ENCODE measurements at regions of chr19 and their contacts with region 1.

Region 1: GRCh38 chr19:49983645-49984229 is 22.8 kb upstream of the SIGLEC11 start:
- DNase-seq: peak; percentile 79
- ATAC-seq: peak; percentile 51
- H3K4me3 Mint-ChIP-seq: no peak overlapping the region
- H3K27ac Mint-ChIP-seq: no peak overlapping the region; the same call in 1 of the 2 replicates
- H3K4me1 Mint-ChIP-seq: no peaks in the 10 kb centered on the region
- H3K27me3 Mint-ChIP-seq: no peaks in the 10 kb centered on the region
- CTCF ChIP-seq: peak; percentile 89

Region 2: GRCh38 chr19:49881672-49882394 is 101.9 kb before region 1 on chr19:
- CTCF ChIA-PET with region 1: no interaction called
- POLR2A ChIA-PET with region 1: no interaction called
- DNase-seq: peak; percentile 63
- ATAC-seq: no peak
- H3K4me3 Mint-ChIP-seq: no peak overlapping the region
- H3K27ac Mint-ChIP-seq: no peak overlapping the region
- H3K4me1 Mint-ChIP-seq: peaks cover 14% of the 10 kb centered on the region
- H3K27me3 Mint-ChIP-seq: no peaks in the 10 kb centered on the region
- CTCF ChIP-seq: no peak

Region 3: DNA sequence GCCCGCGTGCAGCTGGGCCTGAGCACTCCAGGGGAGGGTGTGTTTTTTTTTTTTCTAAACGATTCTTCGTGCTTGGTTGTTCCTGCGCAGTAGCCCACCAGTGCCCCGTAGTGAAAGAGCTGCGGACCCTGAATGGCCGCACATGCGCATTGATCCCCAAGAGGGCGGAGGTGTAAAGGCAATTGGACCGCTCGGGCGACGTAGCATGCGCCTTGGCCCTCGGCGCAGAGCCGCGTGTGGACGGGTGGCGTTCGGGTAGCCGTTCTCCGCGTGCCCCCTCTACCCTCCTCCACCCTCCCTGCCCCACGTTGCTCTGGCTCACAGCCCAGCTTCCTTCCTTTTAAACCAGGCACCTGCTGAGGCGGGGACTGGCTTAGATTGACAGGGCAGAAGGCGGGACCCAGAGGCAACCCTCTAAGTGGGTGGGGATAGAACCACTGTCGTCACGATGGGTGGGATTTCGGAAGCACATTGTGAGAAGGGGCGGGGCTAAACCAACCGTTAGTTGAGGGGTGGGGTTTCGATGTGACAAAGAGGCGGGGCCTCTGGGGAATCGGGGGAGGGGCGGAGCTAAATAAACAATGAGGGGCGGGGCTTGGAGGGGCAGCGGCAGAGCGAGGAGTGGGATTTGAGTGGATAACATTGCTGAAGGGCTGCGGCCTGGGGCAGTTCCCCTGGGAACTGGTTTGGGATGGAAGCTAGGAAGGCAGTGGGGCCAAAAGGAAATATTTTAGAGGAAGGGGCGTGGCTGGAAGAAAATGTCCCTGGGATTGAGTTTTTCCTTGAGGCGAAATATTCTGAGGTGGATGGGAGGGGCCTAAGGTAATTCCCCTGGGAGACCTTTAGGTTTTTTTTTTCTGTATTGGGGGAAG is 53.9 kb before region 1 on chr19:
- CTCF ChIA-PET with region 1: interaction called, 11 read pairs
- POLR2A ChIA-PET with region 1: interaction called, 4 read pairs
- DNase-seq: peak; percentile 97
- ATAC-seq: peak; percentile 87
- H3K4me3 Mint-ChIP-seq: peak overlapping the region; percentile 99
- H3K27ac Mint-ChIP-seq: peak overlapping the region; percentile 99
- H3K4me1 Mint-ChIP-seq: peaks cover 25% of the 10 kb centered on the region
- H3K27me3 Mint-ChIP-seq: peaks cover 4% of the 10 kb centered on the region; the same call in 1 of the 2 replicates
- CTCF ChIP-seq: no peak

Region 4: GRCh38 chr19:49937750-49938381 is 45.9 kb before region 1 on chr19:
- CTCF ChIA-PET with region 1: interaction called, 41 read pairs
- POLR2A ChIA-PET with region 1: interaction called, 4 read pairs
- DNase-seq: peak; percentile 90
- ATAC-seq: peak; percentile 86
- H3K4me3 Mint-ChIP-seq: peak overlapping the region; percentile 51
- H3K27ac Mint-ChIP-seq: no peak overlapping the region
- H3K4me1 Mint-ChIP-seq: no peaks in the 10 kb centered on the region
- H3K27me3 Mint-ChIP-seq: no peaks in the 10 kb centered on the region; the same call in 1 of the 2 replicates
- CTCF ChIP-seq: peak; percentile 92

Region 5: GRCh38 chr19:50016225-50016807 is 32.6 kb after region 1 on chr19:
- CTCF ChIA-PET with region 1: no interaction called
- POLR2A ChIA-PET with region 1: no interaction called
- DNase-seq: no peak
- ATAC-seq: no peak
- H3K4me3 Mint-ChIP-seq: no peak overlapping the region
- H3K27ac Mint-ChIP-seq: no peak overlapping the region
- H3K4me1 Mint-ChIP-seq: no peaks in the 10 kb centered on the region
- H3K27me3 Mint-ChIP-seq: no peaks in the 10 kb centered on the region
- CTCF ChIP-seq: no peak

Region 6: GRCh38 chr19:50026550-50026906 is 42.8 kb after region 1 on chr19:
- CTCF ChIA-PET with region 1: no interaction called
- POLR2A ChIA-PET with region 1: no interaction called
- DNase-seq: no peak
- ATAC-seq: no peak
- H3K4me3 Mint-ChIP-seq: peak overlapping the region; percentile 95
- H3K27ac Mint-ChIP-seq: peak overlapping the region; percentile 10; the same call in 1 of the 2 replicates
- H3K4me1 Mint-ChIP-seq: peaks cover 18% of the 10 kb centered on the region
- H3K27me3 Mint-ChIP-seq: peaks cover 3% of the 10 kb centered on the region; the same call in 1 of the 2 replicates
- CTCF ChIP-seq: no peak

Region 7: GRCh38 chr19:50050384-50051224 is 66.9 kb after region 1 on chr19:
- CTCF ChIA-PET with region 1: interaction called, 11 read pairs
- POLR2A ChIA-PET with region 1: no interaction called
- DNase-seq: peak; percentile 87
- ATAC-seq: peak; percentile 96
- H3K4me3 Mint-ChIP-seq: peak overlapping the region; percentile 80
- H3K27ac Mint-ChIP-seq: peak overlapping the region; percentile 85
- H3K4me1 Mint-ChIP-seq: peaks cover 10% of the 10 kb centered on the region
- H3K27me3 Mint-ChIP-seq: no peaks in the 10 kb centered on the region; the same call in 1 of the 2 replicates
- CTCF ChIP-seq: no peak

Region 8: DNA sequence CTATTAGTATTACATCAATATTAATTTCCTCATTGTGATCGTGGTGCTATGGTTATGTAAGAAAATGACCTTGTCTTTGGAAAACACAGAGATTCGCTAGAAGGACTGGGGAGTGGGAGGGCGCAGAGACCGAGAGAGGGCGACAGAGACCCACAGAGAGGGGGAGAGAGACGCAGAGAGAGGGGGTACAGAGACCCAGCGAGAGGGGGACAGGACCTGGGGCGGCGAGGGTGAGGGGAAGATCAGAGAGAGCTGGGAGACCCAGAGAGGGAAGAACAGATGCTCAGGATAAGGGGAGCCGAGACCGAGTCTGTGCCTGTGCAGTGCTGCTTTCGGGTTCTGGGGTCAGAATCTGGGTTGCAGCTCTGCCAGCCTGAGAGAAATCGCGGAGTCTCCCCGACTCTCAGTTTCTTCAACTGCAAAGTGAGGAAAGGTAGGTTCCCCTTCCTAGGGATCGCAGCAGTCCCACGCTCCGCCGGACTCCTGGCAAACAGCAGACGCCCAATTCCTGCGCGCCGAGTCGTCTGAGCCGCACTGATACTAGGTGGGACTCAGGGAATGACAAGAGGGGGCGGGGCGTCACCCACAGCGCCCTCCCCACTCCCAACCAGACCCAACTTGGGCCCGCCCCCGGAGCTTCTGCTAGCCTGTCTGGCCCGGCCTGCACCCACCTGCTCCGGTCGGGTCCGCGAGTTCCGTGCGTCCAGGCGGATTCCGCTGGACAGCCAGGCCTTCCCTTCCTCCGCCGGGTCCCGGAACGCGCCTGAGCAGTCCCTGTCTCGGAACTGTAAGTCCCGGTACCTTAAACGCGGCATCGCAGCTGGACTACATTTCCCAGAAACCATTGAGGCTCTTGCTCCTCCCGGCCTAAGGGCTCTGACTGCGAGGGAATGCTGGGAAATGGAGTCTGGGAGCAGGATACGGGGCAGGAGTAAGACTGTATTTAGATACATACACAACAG is 164.0 kb after region 1 on chr19:
- CTCF ChIA-PET with region 1: no interaction called
- POLR2A ChIA-PET with region 1: no interaction called
- DNase-seq: peak; percentile 86
- ATAC-seq: peak; percentile 95
- H3K4me3 Mint-ChIP-seq: peak overlapping the region; percentile 72
- H3K27ac Mint-ChIP-seq: no peak overlapping the region
- H3K4me1 Mint-ChIP-seq: no peaks in the 10 kb centered on the region
- H3K27me3 Mint-ChIP-seq: peaks cover 28% of the 10 kb centered on the region
- CTCF ChIP-seq: no peak

Measured in WTC11 (cell line).